Heart right ventricle (tissue), 16 donors: ENCODE measurements at regions of chr7 and their contacts with region 1.

Region 1: DNA sequence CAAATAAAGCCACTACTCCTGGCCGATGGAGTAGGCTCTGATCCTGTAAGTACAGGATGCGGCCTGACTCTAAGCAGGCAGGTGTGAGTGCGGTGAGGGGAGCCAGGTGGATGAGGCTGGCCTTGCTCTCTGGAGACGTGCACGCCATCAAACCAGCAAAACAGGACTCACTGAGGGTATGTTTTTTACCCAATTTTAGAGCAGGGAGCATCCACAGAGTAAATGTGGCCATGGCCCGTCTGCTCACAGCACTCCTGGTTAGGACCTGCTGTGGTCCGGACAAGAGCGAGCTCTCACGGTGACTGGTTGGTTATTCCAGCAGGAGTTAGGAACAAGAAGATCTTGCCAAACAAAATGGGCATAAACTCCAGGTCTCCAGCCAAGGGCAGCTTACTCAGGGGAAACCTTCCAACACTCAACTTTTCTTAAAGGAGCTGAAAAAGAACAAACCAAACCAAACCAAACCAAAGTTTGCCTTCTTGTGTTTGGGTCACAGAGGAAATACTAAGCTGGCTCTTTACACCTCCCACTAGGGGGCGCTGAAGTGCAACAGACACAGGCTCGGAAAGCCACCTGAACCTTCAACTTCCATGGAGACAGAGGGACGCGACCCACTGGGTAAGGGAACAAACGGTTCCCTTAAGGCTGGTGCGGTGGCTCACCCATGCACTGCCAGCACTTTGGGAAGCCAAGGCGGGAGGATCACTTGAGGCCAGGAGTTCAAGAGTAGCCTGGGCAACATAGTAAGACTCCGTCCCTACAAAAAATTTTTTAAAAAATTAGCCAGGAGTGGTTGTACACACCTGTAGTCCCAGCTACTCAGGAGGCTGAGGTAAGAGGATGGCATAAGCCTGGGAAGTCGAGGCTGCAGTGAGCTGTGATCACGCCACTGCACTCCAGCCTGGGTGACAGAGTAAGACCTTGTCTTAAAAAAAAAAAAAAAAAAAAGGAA is 122.4 kb downstream of the CLEC2L start:
- DNase-seq: peak; percentile 78 to 89
- ATAC-seq: peak; percentile 49 to 74 (median 68)
- H3K4me3 ChIP-seq: no peak overlapping the region
- H3K27ac ChIP-seq: peak overlapping the region in 7 of 10 donors; percentile 16 to 84 (median 79)
- H3K4me1 ChIP-seq: peaks cover 5 to 58% (median 48%) of the 10 kb centered on the region in 9 donors
- H3K27me3 ChIP-seq: no peaks in the 10 kb centered on the region
- CTCF ChIP-seq: peak; percentile 88 to 94 (median 91)

Region 2: GRCh38 chr7:139720705-139721231 is 74.9 kb after region 1 on chr7:
- intact Hi-C with region 1: no loop called
- DNase-seq: no peak
- ATAC-seq: peak; percentile 26 to 73 (median 56)
- H3K4me3 ChIP-seq: no peak overlapping the region
- H3K27ac ChIP-seq: peak overlapping the region in 9 of 10 donors; percentile 13 to 80 (median 52)
- H3K4me1 ChIP-seq: peaks cover 23 to 75% (median 57%) of the 10 kb centered on the region in 9 donors
- H3K27me3 ChIP-seq: no peaks in the 10 kb centered on the region
- CTCF ChIP-seq: no peak

Region 3: GRCh38 chr7:139731802-139732470 is 86.1 kb after region 1 on chr7:
- intact Hi-C with region 1: loop called in 3 of 10 experiments (anchors 2 to 5 kb)
- DNase-seq: peak; percentile 76 to 85
- ATAC-seq: peak; percentile 36 to 82 (median 76)
- H3K4me3 ChIP-seq: no peak overlapping the region
- H3K27ac ChIP-seq: peak overlapping the region; percentile 81 to 92 (median 90)
- H3K4me1 ChIP-seq: peaks cover 35 to 91% (median 86%) of the 10 kb centered on the region in 9 donors
- H3K27me3 ChIP-seq: no peaks in the 10 kb centered on the region
- CTCF ChIP-seq: no peak

Region 4: DNA sequence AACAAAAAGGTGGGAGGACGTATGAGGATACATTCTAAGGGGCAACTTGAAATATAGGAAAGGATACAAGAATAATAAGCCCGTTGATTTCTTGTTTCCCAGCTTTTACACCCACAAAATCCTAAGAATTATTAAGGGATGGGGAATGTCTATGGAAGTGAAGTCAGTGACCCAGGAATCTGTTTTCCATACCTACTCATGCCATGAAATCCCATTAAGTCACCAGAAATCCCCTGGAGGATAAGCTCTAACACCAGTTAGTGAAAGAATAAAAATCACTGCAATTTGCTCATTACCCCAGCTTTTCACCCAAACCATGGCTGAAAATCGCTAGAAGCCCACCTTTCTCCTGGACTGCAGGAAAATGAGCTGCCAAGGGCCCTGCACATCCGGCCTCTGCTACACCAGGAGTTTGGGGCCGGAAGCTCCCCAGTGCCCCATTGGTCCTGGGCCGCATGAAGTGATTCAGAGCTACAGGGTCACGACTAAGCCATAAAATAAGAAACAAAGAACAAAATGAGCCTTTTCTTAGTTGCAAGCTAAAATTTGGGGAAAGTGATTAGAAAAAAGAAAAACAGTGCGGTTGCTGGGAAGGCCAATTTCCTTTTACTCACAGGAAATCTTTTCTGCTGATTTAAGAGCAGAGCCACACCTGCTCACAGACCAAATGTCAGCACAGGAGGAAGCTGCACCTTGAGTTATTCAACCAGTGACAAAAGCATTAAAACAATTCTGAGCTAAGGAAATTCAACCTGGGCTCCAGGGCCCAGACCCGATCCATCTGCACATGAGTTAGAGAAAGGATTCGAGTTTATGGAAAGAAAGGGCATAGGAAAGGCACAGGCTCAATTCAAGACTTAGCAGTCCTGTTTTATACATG is 91.6 kb after region 1 on chr7:
- intact Hi-C with region 1: loop called in 3 of 10 experiments (anchors 2 to 5 kb)
- DNase-seq: no peak
- ATAC-seq: no peak
- H3K4me3 ChIP-seq: no peak overlapping the region
- H3K27ac ChIP-seq: peak overlapping the region; percentile 74 to 92 (median 90)
- H3K4me1 ChIP-seq: peaks cover 43 to 100% (median 97%) of the 10 kb centered on the region in 9 donors
- H3K27me3 ChIP-seq: no peaks in the 10 kb centered on the region
- CTCF ChIP-seq: no peak

Region 5: GRCh38 chr7:139771001-139771970 is 125.4 kb after region 1 on chr7:
- intact Hi-C with region 1: loop called in 9 of 10 experiments (anchors 2 to 5 kb)
- DNase-seq: no peak
- ATAC-seq: no peak
- H3K4me3 ChIP-seq: no peak overlapping the region
- H3K27ac ChIP-seq: peak overlapping the region in 1 of 10 donors; percentile 96
- H3K4me1 ChIP-seq: peaks cover 12 to 99% (median 80%) of the 10 kb centered on the region in 9 donors
- H3K27me3 ChIP-seq: no peaks in the 10 kb centered on the region
- CTCF ChIP-seq: no peak